ENCODE measurements at regions of chr14 and their contacts with region 1.

Region 1: GRCh38 chr14:20343092-20343861 is at the start of gene PARP2:
- DNase-seq: peak; percentile 99
- ATAC-seq: peak; percentile 95
- H3K4me3 ChIP-seq: peak within 1 kb of the TSS; percentile 67 to 94
- H3K27ac ChIP-seq: peak within 1 kb of the TSS; percentile 95
- H3K4me1 ChIP-seq: peaks cover 5 to 15% of the 10 kb centered on the region in 2 experiments; a peak in 3 of 4 replicates
- H3K27me3 ChIP-seq: no peaks in the 10 kb centered on the region
- CTCF ChIP-seq: no peak
- POLR2A ChIP-seq: peak; percentile 100
- RAD21 ChIP-seq: no peak
- total RNA-seq, gene PARP2: 51.8 TPM

Region 2: GRCh38 chr14:20332788-20333493 is 10.3 kb before region 1 on chr14 and contains the start of gene CCNB1IP1:
- CTCF ChIA-PET with region 1: interaction called, 9 read pairs
- POLR2A ChIA-PET with region 1: interaction called, 41 read pairs
- RAD21 ChIA-PET with region 1: interaction called in 1 of 2 experiments, 5 read pairs
- intact Hi-C with region 1: no loop called
- DNase-seq: peak; percentile 91
- ATAC-seq: peak; percentile 98
- H3K4me3 ChIP-seq: peak within 1 kb of the TSS; percentile 56 to 83
- H3K27ac ChIP-seq: peak within 1 kb of the TSS; percentile 69
- H3K4me1 ChIP-seq: peaks cover 12 to 16% of the 10 kb centered on the region in 2 experiments
- H3K27me3 ChIP-seq: no peaks in the 10 kb centered on the region
- CTCF ChIP-seq: no peak
- POLR2A ChIP-seq: peak; percentile 76
- RAD21 ChIP-seq: no peak
- total RNA-seq, gene CCNB1IP1: 77.0 TPM

Region 3: GRCh38 chr14:20413045-20413799 is 69.9 kb after region 1 on chr14 and contains the start of gene TEP1:
- CTCF ChIA-PET with region 1: interaction called, 17 read pairs
- POLR2A ChIA-PET with region 1: interaction called, 30 read pairs
- RAD21 ChIA-PET with region 1: interaction called in 1 of 2 experiments, 6 read pairs
- intact Hi-C with region 1: loop called (anchors 5 kb)
- DNase-seq: peak; percentile 58
- ATAC-seq: peak; percentile 93
- H3K4me3 ChIP-seq: peak within 1 kb of the TSS; percentile 91 to 96
- H3K27ac ChIP-seq: peak within 1 kb of the TSS; percentile 98
- H3K4me1 ChIP-seq: peaks cover 11 to 41% of the 10 kb centered on the region in 2 experiments
- H3K27me3 ChIP-seq: no peaks in the 10 kb centered on the region
- CTCF ChIP-seq: no peak
- POLR2A ChIP-seq: no peak
- RAD21 ChIP-seq: no peak
- total RNA-seq, gene TEP1: 22.4 TPM

Region 4: DNA sequence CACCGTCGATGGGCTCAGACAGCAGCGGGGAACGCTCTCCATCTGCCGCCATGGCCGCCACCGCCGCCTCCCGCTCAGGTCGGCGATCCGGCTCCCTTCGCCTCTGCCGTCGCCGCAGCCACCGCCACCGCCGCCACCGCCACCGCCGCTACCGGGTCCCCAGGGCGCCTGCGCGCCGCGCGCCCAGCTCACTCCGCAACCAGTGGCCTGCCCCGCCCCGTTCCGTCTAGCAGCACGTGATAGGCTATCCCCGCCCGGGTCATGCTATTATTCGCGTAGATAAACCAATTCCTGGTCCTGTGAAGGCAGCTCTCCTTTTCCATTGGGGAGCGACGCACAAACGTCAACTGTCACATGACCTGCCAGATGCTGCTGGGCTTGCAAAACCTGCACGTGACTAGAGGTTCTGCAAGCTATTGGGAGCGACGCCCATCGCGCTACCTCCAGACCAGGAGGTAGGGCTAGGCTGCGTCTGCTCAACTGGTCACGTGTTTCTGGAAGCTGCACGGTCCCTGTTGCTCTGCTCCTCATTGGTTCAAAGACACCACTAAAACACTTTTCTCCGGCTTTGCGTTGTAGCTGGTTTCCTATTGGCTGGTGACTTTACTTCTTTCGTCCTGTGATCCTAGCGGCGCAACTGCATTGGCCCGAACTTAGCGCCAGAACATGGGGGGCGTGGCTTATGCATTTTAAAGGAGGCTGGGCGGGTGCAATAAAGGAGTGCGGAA is 118.2 kb after region 1 on chr14 and contains the start of gene PIP4P1:
- CTCF ChIA-PET with region 1: no interaction called
- POLR2A ChIA-PET with region 1: interaction called, 29 read pairs
- RAD21 ChIA-PET with region 1: interaction called in 1 of 2 experiments, 3 read pairs
- intact Hi-C with region 1: loop called (anchors 1 kb)
- DNase-seq: peak; percentile 100
- ATAC-seq: peak; percentile 91
- H3K4me3 ChIP-seq: peak within 1 kb of the TSS; percentile 72 to 85
- H3K27ac ChIP-seq: peak within 1 kb of the TSS; percentile 87
- H3K4me1 ChIP-seq: peaks cover 22 to 25% of the 10 kb centered on the region in 2 experiments
- H3K27me3 ChIP-seq: no peaks in the 10 kb centered on the region
- CTCF ChIP-seq: no peak
- POLR2A ChIP-seq: peak; percentile 20
- RAD21 ChIP-seq: no peak
- total RNA-seq, gene PIP4P1: 35.4 TPM

Region 5: DNA sequence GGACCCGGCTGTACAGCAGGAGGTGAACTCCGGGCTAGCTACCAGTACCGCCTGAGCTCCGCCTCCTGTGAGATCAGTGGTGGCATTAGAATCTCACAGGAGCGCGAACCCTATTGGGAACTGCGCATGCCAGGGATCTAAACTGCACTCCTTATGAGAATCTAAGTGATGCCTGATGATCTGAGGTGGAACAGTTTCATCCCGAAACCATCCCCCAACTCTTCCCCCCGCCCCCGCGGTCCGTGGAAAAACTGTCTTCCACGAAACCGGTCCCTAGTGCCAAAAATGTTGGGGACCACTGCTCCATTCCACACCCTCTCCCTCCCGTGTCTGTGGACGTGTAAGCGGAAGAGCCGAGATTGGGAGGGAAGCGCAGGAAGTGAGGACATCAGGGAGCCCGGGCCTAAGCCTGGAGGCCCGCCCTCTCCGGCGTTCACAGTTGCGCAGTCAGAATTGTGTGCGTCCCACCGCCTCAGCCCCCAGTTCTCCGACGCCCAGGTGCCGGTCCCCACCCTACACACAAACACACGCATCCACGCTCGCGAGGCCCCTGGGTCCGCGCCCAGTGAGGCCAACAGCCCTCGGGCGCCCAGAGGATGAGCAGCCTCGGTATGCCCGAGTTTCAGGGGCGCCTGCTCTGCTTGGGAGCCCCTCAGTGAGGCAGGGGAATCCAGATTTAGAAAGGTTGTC is 339.3 kb after region 1 on chr14:
- CTCF ChIA-PET with region 1: interaction called, 3 read pairs
- POLR2A ChIA-PET with region 1: interaction called, 47 read pairs
- RAD21 ChIA-PET with region 1: no interaction called
- intact Hi-C with region 1: loop called (anchors 2 kb)
- DNase-seq: peak; percentile 88
- ATAC-seq: peak; percentile 61
- H3K4me3 ChIP-seq: peak overlapping the region; percentile 65 to 72
- H3K27ac ChIP-seq: peak overlapping the region; percentile 97
- H3K4me1 ChIP-seq: peaks cover 27 to 64% of the 10 kb centered on the region in 2 experiments
- H3K27me3 ChIP-seq: no peaks in the 10 kb centered on the region
- CTCF ChIP-seq: 0 out of 6 replicates have a peak, but pooled peaks of 1 of the 3 experiments have one; percentile 7
- POLR2A ChIP-seq: peak; percentile 13
- RAD21 ChIP-seq: no peak

Measured in HCT116 (cell line).